ENCODE measurements at regions of chr18 and their contacts with region 1.

Region 1: GRCh38 chr18:2985628-2986027 is 27.3 kb downstream of the LPIN2 start:
- DNase-seq: no peak
- ATAC-seq: peak; percentile 36
- H3K4me3 Mint-ChIP-seq: no peak overlapping the region
- H3K27ac Mint-ChIP-seq: no peak overlapping the region
- H3K4me1 Mint-ChIP-seq: peaks cover 66% of the 10 kb centered on the region
- H3K27me3 Mint-ChIP-seq: no peaks in the 10 kb centered on the region

Region 2: GRCh38 chr18:2932247-2933181 is 53.1 kb before region 1 on chr18:
- CTCF ChIA-PET with region 1: interaction called, 136 read pairs
- POLR2A ChIA-PET with region 1: interaction called, 3 read pairs
- DNase-seq: peak; percentile 75
- ATAC-seq: peak; percentile 73
- H3K4me3 Mint-ChIP-seq: no peak overlapping the region
- H3K27ac Mint-ChIP-seq: peak overlapping the region; percentile 67
- H3K4me1 Mint-ChIP-seq: peaks cover 26% of the 10 kb centered on the region
- H3K27me3 Mint-ChIP-seq: no peaks in the 10 kb centered on the region

Region 3: DNA sequence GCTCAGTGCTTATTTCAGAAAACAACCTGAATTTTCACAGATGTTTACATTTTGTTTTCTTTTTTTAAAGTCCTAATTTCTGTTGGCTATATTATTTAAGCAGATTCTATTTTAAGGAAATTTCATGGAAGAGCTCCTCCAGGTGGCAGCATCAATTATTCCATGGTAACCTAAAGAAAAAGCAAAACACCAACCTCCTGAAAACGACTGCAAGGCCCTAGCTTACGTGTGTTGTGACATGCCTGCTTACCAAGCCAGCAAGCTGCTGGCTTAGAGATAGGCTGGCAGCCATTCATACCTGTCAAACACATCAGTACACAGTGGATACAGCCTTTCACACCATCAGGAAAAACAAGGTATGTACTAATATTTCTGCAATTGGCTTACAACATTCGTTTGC is 37.6 kb before region 1 on chr18:
- CTCF ChIA-PET with region 1: interaction called, 75 read pairs
- POLR2A ChIA-PET with region 1: interaction called, 3 read pairs
- DNase-seq: no peak
- ATAC-seq: no peak
- H3K4me3 Mint-ChIP-seq: no peak overlapping the region
- H3K27ac Mint-ChIP-seq: no peak overlapping the region
- H3K4me1 Mint-ChIP-seq: peaks cover 30% of the 10 kb centered on the region
- H3K27me3 Mint-ChIP-seq: no peaks in the 10 kb centered on the region

Region 4: DNA sequence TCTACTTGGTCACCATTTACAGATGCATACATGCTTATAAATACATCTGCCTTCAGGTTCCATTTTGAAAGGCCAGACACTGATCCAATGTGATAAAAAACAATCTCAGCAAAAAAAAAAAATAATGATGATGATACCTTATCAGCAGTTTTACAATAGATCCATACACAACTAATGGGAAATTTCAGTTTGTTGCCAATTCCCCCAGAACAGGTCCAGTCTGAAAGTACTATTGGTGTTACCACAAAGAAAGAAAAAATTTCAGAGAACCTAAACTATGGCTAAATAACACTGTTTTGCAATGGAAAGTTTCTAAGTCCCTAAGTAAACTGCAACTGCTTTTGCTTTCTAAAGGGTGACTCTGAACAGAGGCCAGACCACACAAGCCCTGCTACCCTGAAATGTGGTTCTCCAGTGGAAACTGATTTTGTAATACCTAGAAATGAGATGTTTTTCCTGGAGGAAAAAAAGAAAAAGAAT is 26.8 kb before region 1 on chr18:
- CTCF ChIA-PET with region 1: interaction called, 130 read pairs
- POLR2A ChIA-PET with region 1: interaction called, 33 read pairs
- DNase-seq: peak; percentile 78
- ATAC-seq: peak; percentile 56
- H3K4me3 Mint-ChIP-seq: peak overlapping the region; percentile 72
- H3K27ac Mint-ChIP-seq: peak overlapping the region; percentile 95
- H3K4me1 Mint-ChIP-seq: peaks cover 89% of the 10 kb centered on the region
- H3K27me3 Mint-ChIP-seq: no peaks in the 10 kb centered on the region

Region 5: DNA sequence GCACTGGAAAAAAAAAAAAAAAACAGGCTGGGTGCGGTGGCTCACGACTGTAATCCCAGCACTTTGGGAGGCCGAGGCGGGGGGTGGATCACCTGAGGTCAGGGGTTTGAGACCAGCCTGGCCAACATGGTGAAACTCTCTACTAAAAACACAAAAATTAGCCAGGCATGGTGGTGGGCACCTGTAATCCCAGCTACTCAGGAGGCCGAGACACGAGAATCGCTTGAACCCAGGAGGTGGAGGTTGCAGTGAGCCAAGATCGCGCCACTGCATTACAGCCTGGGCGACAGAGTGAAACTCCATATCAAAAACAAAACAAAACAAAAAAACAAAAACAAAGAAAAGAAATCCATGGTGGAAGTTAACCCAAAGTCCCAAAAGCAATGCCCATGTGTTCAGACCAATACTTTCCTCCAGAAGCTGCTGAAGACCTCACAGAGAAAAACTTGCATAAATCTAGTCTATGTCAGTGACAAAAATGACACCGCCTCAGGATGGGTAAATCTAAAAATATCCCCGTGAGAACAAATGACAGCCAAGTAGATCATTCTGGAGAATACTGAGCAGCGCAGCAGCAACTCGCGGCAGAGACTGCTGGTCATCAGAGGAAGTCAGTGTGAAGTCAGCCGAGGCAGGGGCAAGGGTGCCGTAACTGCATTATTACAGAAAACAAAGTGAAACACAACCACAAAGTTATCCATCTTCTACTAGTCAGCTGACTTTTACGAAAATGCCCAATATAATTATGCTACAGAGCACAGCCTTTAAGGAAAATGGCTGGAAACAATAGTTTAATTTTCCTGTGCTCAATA is 13.7 kb before region 1 on chr18:
- CTCF ChIA-PET with region 1: interaction called, 84 read pairs
- POLR2A ChIA-PET with region 1: interaction called, 29 read pairs
- DNase-seq: peak; percentile 86
- ATAC-seq: peak; percentile 75
- H3K4me3 Mint-ChIP-seq: peak overlapping the region; percentile 76
- H3K27ac Mint-ChIP-seq: peak overlapping the region; percentile 96
- H3K4me1 Mint-ChIP-seq: peaks cover 91% of the 10 kb centered on the region
- H3K27me3 Mint-ChIP-seq: no peaks in the 10 kb centered on the region

Region 6: DNA sequence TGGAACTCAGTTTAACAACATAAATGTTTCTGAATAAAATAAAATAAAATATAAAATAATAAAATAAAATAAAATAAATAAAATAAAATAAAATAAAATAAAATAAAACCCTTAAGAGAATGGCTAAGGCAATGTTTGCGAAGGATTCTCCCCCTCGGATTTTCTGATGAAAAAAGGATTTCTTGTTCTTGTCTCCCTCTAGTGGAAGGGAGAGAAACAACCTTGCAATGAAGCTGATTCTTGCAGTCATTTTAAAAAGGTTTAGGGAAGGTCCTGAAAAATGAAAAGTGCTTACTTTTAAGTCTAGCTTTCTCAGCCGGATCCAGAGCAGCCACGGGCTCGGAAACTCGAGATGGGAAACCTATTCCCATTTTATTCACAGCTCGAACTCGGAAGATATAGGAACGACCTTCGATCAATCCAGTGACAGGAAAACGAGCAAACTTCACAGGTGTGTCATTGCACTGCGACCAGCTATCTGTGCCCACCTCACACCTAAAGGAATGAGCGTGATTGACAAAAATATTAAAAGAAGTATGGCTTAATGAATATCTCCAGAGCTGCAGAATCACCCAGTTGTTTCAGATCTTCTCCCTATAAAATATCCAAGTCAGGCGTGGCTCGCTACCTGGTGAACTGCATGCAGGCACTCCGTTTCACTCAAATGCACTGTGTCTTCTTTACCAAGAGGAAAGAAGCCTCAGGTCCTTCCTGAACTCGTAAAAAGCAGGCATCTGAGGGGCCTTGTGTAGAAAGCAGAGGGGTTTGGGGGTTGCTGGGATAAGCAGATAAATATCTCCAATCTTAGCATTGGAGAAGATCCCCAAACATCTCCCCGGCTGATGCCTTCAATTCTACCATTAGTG is 166.0 kb after region 1 on chr18:
- CTCF ChIA-PET with region 1: interaction called, 10 read pairs
- POLR2A ChIA-PET with region 1: no interaction called
- DNase-seq: no peak
- ATAC-seq: no peak
- H3K4me3 Mint-ChIP-seq: no peak overlapping the region
- H3K27ac Mint-ChIP-seq: no peak overlapping the region
- H3K4me1 Mint-ChIP-seq: no peaks in the 10 kb centered on the region
- H3K27me3 Mint-ChIP-seq: no peaks in the 10 kb centered on the region

Measured in activated CD8-positive, alpha-beta T cell treated with anti-CD3 and anti-CD28 coated beads, Interleukin-2, amount 10 ng/mL, durations not matched to agents 7 days and 5 days (primary cell).